PC-3 (cell line): ENCODE measurements at regions of chr2 and their contacts with region 1.

Region 1: DNA sequence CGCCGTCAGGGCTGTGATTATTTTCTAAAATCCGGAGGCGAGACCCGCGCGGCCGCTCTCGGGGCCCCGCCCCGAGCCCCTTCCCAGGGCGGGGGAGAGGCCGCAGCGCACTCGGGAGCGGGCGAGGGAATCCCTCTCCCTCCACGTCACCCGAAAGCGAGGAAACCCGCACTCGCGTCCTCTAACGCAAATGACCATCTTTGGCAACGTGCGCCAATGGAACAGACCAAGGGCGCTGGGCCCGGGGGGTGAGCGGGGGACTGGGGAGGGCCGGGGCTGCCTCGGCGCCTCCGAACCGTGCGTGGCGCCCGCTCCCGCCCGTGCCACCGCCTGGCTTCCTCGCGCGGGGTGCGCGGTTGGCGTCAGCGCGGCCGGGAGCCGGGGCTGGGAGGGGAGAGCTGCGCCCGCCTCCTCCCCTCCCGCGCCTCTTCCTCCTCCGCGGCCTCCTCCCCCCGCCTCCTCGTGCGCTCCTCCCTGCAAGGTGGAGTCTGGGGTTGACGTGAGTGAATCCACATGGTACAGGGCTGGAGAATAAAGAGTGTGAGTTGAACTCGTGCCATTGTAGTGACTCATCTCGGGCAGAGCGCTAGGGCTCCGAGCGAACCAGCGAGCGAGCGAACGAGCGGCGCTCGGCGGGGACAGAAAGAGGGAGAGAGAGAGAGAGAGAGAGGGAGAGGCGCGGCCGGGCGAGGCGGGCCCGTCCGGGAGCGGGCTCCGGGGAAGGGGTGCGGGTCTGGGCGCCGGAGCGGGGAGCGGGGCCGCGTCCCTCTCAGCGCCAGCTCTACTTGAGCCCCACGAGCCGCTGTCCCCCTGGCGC is at the start of gene FOSL2:
- DNase-seq: peak; percentile 99
- ATAC-seq: peak; percentile 61
- H3K4me3 ChIP-seq: peak within 1 kb of the TSS; percentile 87
- H3K27ac ChIP-seq: peak within 1 kb of the TSS; percentile 91
- H3K4me1 ChIP-seq: peaks cover 38% of the 10 kb centered on the region
- H3K27me3 ChIP-seq: no peaks in the 10 kb centered on the region
- CTCF ChIP-seq: no peak
- total RNA-seq, gene FOSL2: 34.2 and 46.8 TPM in 2 replicates

Region 2: DNA sequence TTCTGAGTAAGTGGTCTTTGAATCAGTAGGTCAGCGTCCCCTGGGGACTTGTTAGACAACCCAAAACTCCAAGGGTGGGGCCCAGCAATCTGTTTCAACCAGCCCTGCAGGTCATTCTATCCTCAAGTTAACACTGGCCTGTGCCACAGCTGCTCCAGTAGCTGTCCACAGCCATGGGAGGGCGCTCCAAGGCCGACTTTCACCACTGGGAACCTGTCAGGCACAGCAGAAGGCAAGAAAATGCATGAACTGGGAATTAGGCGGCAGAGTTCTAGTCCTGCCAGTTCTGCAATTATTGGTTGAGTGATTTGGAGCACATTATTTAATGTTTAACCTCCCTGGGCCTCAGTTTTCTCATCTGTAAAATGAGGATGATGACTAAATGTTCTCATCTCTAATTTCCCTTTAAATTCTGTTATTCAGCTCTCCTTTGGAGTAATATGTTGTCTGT is 638.3 kb before region 1 on chr2:
- CTCF ChIA-PET with region 1: no interaction called
- POLR2A ChIA-PET with region 1: no interaction called
- intact Hi-C with region 1: loop called (anchors 1 kb)
- DNase-seq: peak; percentile 89
- ATAC-seq: peak; percentile 99
- H3K4me3 ChIP-seq: no peak overlapping the region
- H3K27ac ChIP-seq: no peak overlapping the region
- H3K4me1 ChIP-seq: peaks cover 10% of the 10 kb centered on the region; the same call in 1 of the 2 replicates
- H3K27me3 ChIP-seq: no peaks in the 10 kb centered on the region
- CTCF ChIP-seq: peak; percentile 98

Region 3: GRCh38 chr2:27954771-27955383 is 437.6 kb before region 1 on chr2:
- CTCF ChIA-PET with region 1: no interaction called
- POLR2A ChIA-PET with region 1: no interaction called
- intact Hi-C with region 1: loop called (anchors 1 kb)
- DNase-seq: peak; percentile 94
- ATAC-seq: peak; percentile 80
- H3K4me3 ChIP-seq: peak overlapping the region; percentile 49; the same call in 1 of the 2 replicates
- H3K27ac ChIP-seq: peak overlapping the region; percentile 93
- H3K4me1 ChIP-seq: peaks cover 68% of the 10 kb centered on the region
- H3K27me3 ChIP-seq: no peaks in the 10 kb centered on the region
- CTCF ChIP-seq: peak; percentile 47

Region 4: DNA sequence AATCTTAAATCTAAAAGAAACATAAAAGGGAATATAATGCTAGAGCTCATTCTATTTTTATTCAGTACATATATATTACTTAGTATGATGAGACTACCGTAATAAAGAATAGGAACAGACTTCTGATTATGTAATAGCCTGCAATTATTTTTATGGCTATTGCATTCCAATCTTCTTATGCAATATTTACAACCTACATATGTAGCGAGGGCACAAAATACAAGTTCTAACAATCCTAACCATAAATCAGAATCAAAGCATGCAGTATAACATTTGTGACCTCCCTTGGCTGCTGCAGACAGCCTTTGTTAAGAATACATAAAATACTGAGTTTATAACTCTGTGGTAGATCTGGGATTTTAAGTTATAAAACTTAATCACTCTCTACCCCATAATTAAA is 324.4 kb before region 1 on chr2:
- CTCF ChIA-PET with region 1: no interaction called
- POLR2A ChIA-PET with region 1: interaction called, 11 read pairs
- intact Hi-C with region 1: no loop called
- DNase-seq: peak; percentile 89
- ATAC-seq: peak; percentile 84
- H3K4me3 ChIP-seq: no peak overlapping the region
- H3K27ac ChIP-seq: no peak overlapping the region
- H3K4me1 ChIP-seq: peaks cover 25% of the 10 kb centered on the region
- H3K27me3 ChIP-seq: no peaks in the 10 kb centered on the region
- CTCF ChIP-seq: no peak

Region 5: GRCh38 chr2:28080911-28081310 is 311.6 kb before region 1 on chr2:
- CTCF ChIA-PET with region 1: no interaction called
- POLR2A ChIA-PET with region 1: no interaction called
- intact Hi-C with region 1: no loop called
- DNase-seq: peak; percentile 51
- ATAC-seq: peak; percentile 68
- H3K4me3 ChIP-seq: no peak overlapping the region
- H3K27ac ChIP-seq: no peak overlapping the region
- H3K4me1 ChIP-seq: peaks cover 16% of the 10 kb centered on the region; the same call in 1 of the 2 replicates
- H3K27me3 ChIP-seq: no peaks in the 10 kb centered on the region
- CTCF ChIP-seq: no peak

Region 6: GRCh38 chr2:28233164-28233676 is 159.3 kb before region 1 on chr2:
- CTCF ChIA-PET with region 1: no interaction called
- POLR2A ChIA-PET with region 1: no interaction called
- intact Hi-C with region 1: loop called (anchors 1 kb)
- DNase-seq: peak; percentile 44
- ATAC-seq: peak; percentile 84
- H3K4me3 ChIP-seq: no peak overlapping the region
- H3K27ac ChIP-seq: peak overlapping the region; percentile 52
- H3K4me1 ChIP-seq: peaks cover 16% of the 10 kb centered on the region
- H3K27me3 ChIP-seq: no peaks in the 10 kb centered on the region
- CTCF ChIP-seq: no peak

Region 7: GRCh38 chr2:28356095-28356911 is 36.2 kb before region 1 on chr2:
- CTCF ChIA-PET with region 1: no interaction called
- POLR2A ChIA-PET with region 1: no interaction called
- intact Hi-C with region 1: no loop called
- DNase-seq: peak; percentile 42
- ATAC-seq: peak; percentile 48
- H3K4me3 ChIP-seq: no peak overlapping the region
- H3K27ac ChIP-seq: peak overlapping the region; percentile 25; the same call in 1 of the 2 replicates
- H3K4me1 ChIP-seq: peaks cover 34% of the 10 kb centered on the region
- H3K27me3 ChIP-seq: no peaks in the 10 kb centered on the region
- CTCF ChIP-seq: no peak

Region 8: GRCh38 chr2:28375742-28376631 is 16.5 kb before region 1 on chr2:
- CTCF ChIA-PET with region 1: no interaction called
- POLR2A ChIA-PET with region 1: no interaction called
- intact Hi-C with region 1: loop called (anchors 2 kb)
- DNase-seq: no peak
- ATAC-seq: no peak
- H3K4me3 ChIP-seq: no peak overlapping the region
- H3K27ac ChIP-seq: no peak overlapping the region
- H3K4me1 ChIP-seq: peaks cover 27% of the 10 kb centered on the region
- H3K27me3 ChIP-seq: no peaks in the 10 kb centered on the region
- CTCF ChIP-seq: no peak

Region 9: GRCh38 chr2:28539118-28539541 is 146.6 kb after region 1 on chr2:
- CTCF ChIA-PET with region 1: no interaction called
- POLR2A ChIA-PET with region 1: no interaction called
- intact Hi-C with region 1: no loop called
- DNase-seq: no peak
- ATAC-seq: no peak
- H3K4me3 ChIP-seq: no peak overlapping the region
- H3K27ac ChIP-seq: no peak overlapping the region
- H3K4me1 ChIP-seq: no peaks in the 10 kb centered on the region
- H3K27me3 ChIP-seq: no peaks in the 10 kb centered on the region
- CTCF ChIP-seq: no peak

Region 10: DNA sequence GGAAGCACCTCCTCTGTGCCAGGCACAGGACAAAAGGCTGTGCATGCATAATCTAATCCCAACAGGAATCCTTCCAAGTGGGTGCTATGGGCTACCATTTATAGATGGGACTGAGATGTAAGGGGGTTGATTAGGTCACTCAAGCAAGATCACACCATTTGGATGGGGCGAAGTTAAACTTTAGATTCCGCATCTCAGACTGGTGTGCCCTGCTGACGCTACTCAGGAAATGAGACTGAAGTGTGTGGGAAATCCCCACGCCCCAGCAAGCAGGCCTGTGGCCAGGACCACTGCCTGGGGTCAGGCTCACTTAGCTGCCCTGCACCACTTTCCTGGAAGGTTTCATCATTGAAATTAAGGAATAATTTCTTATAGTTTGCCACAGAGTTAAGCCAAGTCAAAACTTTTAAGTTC is 288.7 kb after region 1 on chr2:
- CTCF ChIA-PET with region 1: no interaction called
- POLR2A ChIA-PET with region 1: no interaction called
- intact Hi-C with region 1: no loop called
- DNase-seq: no peak
- ATAC-seq: no peak
- H3K4me3 ChIP-seq: no peak overlapping the region
- H3K27ac ChIP-seq: no peak overlapping the region
- H3K4me1 ChIP-seq: peaks cover 6% of the 10 kb centered on the region; the same call in 1 of the 2 replicates
- H3K27me3 ChIP-seq: no peaks in the 10 kb centered on the region
- CTCF ChIP-seq: no peak